WTC11 (cell line): ENCODE measurements at regions of chr15 and their contacts with region 1.

Region 1: GRCh38 chr15:59492389-59493377 is 54.7 kb downstream of the FAM81A start:
- DNase-seq: peak; percentile 63
- ATAC-seq: peak; percentile 95
- H3K4me3 Mint-ChIP-seq: peak overlapping the region; percentile 46
- H3K27ac Mint-ChIP-seq: no peak overlapping the region
- H3K4me1 Mint-ChIP-seq: peaks cover 9% of the 10 kb centered on the region
- H3K27me3 Mint-ChIP-seq: peaks cover 4% of the 10 kb centered on the region
- CTCF ChIP-seq: peak; percentile 64

Region 2: DNA sequence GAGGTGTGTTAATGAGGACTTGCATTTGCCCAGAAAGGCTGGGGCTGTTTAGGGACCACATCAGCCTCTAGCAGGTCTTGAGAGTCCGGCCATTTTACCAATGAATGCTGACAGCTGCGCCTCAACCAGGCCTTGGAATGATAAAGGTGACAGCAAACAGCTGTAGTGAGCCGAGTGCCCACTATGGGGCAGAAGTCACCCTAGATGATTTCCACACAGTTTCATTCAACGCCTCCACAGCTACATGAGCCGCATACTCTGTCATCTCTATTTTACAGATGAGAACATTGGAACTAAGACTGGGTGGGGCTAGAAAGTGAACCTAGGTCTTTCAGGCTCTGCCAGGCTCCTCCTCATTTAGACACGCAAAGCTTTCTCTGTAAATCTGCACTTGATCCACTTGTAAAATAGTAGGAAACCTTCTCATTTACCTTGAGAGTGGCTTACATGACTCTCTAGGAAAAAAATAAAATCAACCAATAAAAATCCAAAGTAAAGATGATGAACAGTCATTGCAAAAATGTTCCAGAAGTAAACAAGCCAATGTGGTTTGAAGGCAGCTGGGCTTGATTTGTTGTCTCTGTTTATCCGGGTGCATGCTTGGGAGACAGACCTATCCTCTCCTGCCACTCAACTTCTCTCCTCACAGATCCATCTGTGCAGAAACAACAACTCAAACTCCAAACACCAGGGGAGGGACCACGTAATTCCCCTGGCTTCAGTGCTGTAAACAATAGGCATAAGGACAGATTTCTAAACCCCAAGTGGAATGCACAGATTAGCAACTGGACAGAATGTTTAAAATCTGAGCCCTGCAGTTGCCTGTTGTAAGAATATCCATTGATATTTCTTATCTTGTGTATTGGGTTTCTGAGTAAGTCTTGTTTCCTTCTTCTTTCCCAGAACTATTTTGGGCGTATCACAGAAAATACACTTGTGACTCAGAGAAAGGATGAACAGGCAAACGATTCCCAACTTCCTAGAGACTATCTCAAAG is 317.6 kb before region 1 on chr15:
- CTCF ChIA-PET with region 1: interaction called, 33 read pairs
- POLR2A ChIA-PET with region 1: no interaction called
- DNase-seq: peak; percentile 65
- ATAC-seq: peak; percentile 96
- H3K4me3 Mint-ChIP-seq: no peak overlapping the region
- H3K27ac Mint-ChIP-seq: peak overlapping the region; percentile 78
- H3K4me1 Mint-ChIP-seq: peaks cover 8% of the 10 kb centered on the region
- H3K27me3 Mint-ChIP-seq: no peaks in the 10 kb centered on the region
- CTCF ChIP-seq: no peak

Region 3: DNA sequence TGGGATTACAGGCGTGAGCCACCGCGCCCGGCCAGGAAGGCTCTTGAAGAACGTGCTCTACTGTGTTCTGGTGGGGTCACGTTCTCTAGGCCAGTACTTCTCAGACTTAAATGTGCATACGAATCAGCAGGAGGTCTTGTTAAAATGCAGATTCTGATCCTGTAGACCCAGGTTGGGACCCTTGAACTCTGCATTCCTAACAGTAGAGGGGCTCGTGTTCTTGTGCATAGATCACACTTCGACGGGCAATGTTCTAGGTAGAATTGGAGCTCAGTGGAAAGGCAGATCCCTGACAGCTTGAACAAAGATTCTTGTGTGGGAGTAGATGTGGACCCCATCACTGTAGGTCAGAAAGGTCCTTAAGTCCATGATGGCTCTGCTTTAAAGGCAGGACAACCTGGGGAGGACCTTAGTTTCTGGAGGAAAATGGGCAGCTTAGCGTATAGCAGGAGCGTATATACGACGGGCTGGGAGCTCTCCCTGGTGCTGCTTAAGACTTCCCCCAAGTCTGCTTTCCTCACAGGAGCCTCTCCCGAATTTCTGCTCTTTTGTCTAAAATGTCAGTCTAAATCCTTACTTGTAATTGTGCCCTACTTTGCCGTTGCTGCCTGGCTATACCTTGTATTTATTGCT is 71.6 kb before region 1 on chr15:
- CTCF ChIA-PET with region 1: interaction called, 17 read pairs
- POLR2A ChIA-PET with region 1: no interaction called
- DNase-seq: peak; percentile 36
- ATAC-seq: peak; percentile 97
- H3K4me3 Mint-ChIP-seq: no peak overlapping the region
- H3K27ac Mint-ChIP-seq: no peak overlapping the region
- H3K4me1 Mint-ChIP-seq: peaks cover 19% of the 10 kb centered on the region
- H3K27me3 Mint-ChIP-seq: peaks cover 26% of the 10 kb centered on the region
- CTCF ChIP-seq: no peak